ENCODE measurements at regions of chr5 and their contacts with region 1.

Region 1: DNA sequence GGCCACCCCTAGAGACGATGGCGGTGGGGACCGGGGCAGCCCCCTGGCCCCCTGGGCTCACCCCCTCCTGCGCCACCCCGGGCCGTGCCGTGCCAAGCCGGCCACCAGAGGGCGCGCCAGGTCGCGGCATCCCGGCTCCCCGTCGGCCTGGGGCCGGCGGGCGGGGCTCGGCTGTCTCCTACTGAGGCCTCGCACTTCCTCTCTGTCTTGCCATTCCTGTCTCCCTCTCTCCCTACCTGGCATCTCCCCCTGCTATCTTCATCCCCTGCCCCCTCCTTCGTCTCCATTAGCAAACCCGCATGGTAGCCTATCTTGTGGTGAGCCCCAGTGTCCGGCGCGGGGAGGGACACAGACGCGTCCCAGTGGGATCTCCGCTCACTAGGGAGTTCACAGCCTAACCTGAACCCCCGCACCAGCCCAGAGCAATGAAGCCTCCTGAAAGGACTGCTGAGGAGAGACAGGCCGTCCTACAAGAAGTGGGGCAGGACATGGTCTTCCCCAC is 29.8 kb upstream of the FABP6 start:
- DNase-seq: peak; percentile 89
- ATAC-seq: peak; percentile 95

Region 2: GRCh38 chr5:159444441-159445082 is 754.9 kb before region 1 on chr5:
- intact Hi-C with region 1: no loop called
- DNase-seq: no peak
- ATAC-seq: no peak

Region 3: DNA sequence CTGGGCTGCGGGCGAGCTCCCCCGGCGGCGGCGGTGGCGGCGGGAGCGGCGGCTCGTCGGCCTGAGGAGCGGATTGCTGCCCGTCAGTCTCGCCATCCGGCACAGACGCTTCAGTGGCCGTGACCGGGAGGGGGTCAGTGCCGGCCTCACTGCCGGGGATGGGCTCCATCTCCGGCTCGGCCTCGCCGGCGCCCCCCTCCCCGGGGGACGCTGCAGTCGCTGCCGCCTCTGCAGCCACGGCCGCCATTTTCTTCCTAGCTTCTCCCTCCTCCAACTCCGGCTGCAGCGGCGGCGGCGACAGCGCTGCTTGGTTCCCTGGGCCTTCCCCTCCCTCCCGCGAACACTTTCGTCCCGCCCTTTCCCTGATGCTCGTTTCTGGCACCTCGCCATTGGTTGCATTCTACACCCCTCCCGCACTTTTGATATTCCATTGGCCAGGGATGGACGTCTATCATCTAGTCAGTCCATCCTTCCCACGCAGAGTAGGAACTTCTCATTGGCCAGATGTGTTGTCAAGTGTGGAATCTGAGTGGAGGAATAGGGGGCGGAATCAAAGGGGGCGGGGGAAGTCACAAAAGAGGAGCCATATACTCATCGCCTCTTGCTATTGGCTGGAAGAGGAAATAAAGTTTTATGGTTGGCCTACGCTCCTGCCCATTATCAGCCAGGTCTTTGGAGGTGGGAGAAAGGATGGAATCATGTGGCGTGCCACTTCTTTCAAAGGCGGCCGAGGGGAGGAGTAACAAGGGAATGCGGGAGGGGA is 80.1 kb before region 1 on chr5 and contains the start of gene PWWP2A:
- intact Hi-C with region 1: loop called (anchors 5 kb)
- DNase-seq: peak; percentile 99
- ATAC-seq: peak; percentile 98
- total RNA-seq, gene PWWP2A: 13.2 TPM

Region 4: DNA sequence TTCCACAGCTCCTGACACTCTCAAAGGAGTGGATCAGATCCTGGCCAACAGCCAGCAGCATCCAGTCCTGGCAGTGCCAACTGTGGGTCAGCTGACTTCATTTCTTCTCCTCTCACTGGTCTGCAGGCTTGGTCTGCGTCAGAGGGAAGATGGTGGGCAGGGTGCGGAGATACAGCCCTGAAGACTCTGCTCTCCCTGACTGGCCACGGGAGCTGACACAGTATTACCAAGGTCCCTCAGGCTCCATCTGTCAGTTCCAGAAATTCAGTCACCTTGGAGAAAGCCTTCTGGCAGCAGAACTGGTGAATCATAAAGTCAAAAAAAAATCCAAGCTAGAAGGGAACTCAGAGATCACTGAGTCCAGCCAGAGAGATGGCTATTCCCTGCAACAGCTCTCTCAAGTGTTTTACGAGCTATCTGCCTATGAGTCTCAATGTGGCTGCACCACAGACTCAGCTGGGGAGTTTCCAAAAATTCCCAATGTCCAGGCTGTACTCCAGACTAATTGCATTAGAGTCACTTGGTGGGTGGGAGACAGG is 143.0 kb after region 1 on chr5:
- intact Hi-C with region 1: loop called (anchors 1 kb)
- DNase-seq: no peak
- ATAC-seq: no peak

Region 5: GRCh38 chr5:160390787-160391696 is 191.6 kb after region 1 on chr5:
- intact Hi-C with region 1: loop called (anchors 2 kb)
- DNase-seq: no peak
- ATAC-seq: no peak

Measured in Right ventricle myocardium inferior (tissue), 1 donor.